ENCODE measurements at regions of chr1 and their contacts with region 1.

Region 1: GRCh38 chr1:172719694-172720138 is 60.8 kb downstream of the FASLG start:
- DNase-seq: peak in 2 of 9 experiments; percentile 73 to 77
- ATAC-seq: peak; percentile 93
- H3K4me3 ChIP-seq: no peak overlapping the region
- H3K4me3 Mint-ChIP-seq: no peak overlapping the region
- H3K27ac ChIP-seq: no peak overlapping the region
- H3K27ac Mint-ChIP-seq: no peak overlapping the region
- H3K4me1 ChIP-seq: no peaks in the 10 kb centered on the region
- H3K4me1 Mint-ChIP-seq: peaks cover 22% of the 10 kb centered on the region
- H3K27me3 ChIP-seq: no peaks in the 10 kb centered on the region
- H3K27me3 Mint-ChIP-seq: peaks cover 3% of the 10 kb centered on the region
- CTCF ChIP-seq: peak; percentile 94

Region 2: DNA sequence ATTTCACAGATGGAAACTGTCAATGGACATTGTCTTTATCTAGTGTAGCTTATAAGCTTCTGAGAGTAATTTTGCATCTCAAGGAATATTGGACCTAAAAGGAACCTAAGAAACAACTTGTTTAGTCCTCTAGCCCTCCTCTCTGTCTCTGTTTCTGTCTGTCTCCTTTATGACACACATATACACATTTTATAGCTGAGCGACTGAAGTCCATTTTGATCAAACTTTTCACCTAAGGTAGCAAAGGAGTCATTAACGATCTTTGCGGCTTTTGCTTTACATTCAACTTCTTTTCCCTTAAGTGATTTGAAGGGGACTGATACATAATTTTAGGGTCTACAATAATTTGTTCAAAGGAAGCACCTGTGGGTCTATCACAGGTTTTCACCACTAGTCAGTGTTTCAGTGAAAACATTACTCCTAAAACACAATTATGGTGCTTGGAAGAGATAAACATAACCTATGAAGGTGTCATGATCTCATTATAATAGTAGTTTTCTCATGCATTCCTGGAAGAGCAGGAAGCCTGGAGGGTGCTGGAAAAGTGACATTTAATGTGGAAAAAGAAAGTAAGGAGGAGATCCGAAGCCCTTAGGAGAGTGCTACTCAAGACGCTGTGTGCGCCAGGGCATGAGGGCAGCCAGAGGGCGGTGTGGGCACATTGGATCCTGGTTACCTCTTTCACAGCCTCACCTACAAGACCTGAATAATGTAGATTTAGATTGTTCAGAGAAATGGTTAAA is 629.8 kb before region 1 on chr1:
- CTCF ChIA-PET with region 1: interaction called, 3 read pairs
- POLR2A ChIA-PET with region 1: no interaction called
- intact Hi-C with region 1: loop called in 1 of 2 experiments (anchors 5 kb)
- DNase-seq: peak; percentile 13 to 74 (median 54)
- ATAC-seq: peak; percentile 84
- H3K4me3 ChIP-seq: no peak overlapping the region
- H3K4me3 Mint-ChIP-seq: no peak overlapping the region
- H3K27ac ChIP-seq: no peak overlapping the region
- H3K27ac Mint-ChIP-seq: no peak overlapping the region
- H3K4me1 ChIP-seq: peaks cover 4% of the 10 kb centered on the region
- H3K4me1 Mint-ChIP-seq: peaks cover 4% of the 10 kb centered on the region
- H3K27me3 ChIP-seq: no peaks in the 10 kb centered on the region
- H3K27me3 Mint-ChIP-seq: no peaks in the 10 kb centered on the region
- CTCF ChIP-seq: peak; percentile 66

Region 3: DNA sequence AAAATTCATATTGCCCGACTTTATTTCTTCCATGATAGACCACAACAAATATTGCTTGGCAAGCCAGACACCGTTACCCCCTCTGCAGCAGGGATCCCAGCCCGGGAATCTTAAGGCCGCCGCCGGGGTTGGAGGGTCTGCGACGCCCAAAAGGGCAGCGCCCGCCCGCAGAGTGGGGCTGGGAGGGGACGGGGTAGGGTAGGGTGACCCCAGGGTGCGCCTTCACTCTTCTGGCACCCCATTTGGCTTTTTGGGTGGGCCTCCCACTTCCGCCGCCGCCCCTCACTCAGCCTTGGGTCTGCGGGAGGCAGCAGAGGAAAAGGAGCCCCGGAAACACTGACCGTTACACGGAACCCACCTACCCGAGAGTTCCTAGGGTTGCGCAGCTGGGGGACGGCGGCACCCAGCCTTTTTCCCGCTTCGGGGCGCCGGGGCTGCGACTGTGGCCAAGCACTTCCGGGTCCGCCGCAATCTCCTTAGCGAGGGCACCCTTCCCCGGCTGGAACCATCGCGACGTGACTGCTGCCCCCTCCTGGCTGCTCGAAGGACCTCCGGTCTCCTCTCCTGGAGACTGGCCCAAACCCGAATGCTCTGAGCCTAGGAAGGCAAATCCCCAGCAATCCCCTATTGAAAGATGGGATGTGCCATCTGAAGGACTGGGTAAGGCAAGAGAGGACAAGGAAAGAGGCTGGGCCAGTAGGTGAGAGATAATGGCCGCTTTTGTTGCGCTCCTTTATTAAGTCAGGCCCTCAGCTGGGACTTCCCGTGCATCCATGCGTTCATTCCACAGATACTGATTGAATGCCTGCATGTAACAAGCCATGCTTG is 275.9 kb before region 1 on chr1 and contains the start of gene PIGC:
- CTCF ChIA-PET with region 1: interaction called, 4 read pairs
- POLR2A ChIA-PET with region 1: no interaction called
- intact Hi-C with region 1: loop called in 1 of 2 experiments (anchors 2 kb)
- DNase-seq: peak; percentile 83 to 94 (median 93)
- ATAC-seq: peak; percentile 99
- H3K4me3 ChIP-seq: peak within 1 kb of the TSS; percentile 78 to 90
- H3K4me3 Mint-ChIP-seq: peak within 1 kb of the TSS; percentile 96
- H3K27ac ChIP-seq: peak within 1 kb of the TSS; percentile 71 to 83
- H3K27ac Mint-ChIP-seq: peak within 1 kb of the TSS; percentile 95
- H3K4me1 ChIP-seq: peaks cover 25% of the 10 kb centered on the region
- H3K4me1 Mint-ChIP-seq: peaks cover 45% of the 10 kb centered on the region
- H3K27me3 ChIP-seq: no peaks in the 10 kb centered on the region
- H3K27me3 Mint-ChIP-seq: no peaks in the 10 kb centered on the region
- CTCF ChIP-seq: peak; percentile 77
- total RNA-seq, gene PIGC: 22.1 to 23.2 TPM

Region 4: DNA sequence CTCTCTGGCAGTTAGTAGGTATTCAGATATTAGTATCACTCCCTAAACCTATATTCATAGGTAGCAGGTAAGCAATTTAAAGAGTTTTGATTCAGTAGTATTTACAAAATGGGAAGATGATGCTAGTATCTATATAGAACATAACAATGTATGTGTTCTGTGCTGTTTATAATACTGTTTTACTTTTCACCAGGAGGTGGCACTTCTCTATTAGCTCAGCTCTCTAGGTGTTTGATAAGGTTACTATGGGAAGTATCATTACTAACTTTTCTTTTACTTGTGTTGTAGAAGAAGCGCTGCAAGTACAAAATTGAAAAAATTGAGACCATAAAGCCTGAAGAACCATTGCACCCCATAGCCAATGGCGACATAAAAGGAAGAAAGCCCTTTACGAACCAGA is 110.2 kb before region 1 on chr1:
- CTCF ChIA-PET with region 1: interaction called, 141 read pairs
- POLR2A ChIA-PET with region 1: interaction called, 6 read pairs
- intact Hi-C with region 1: loop called (anchors 1 kb)
- DNase-seq: peak in 2 of 9 experiments; percentile 53 to 62
- ATAC-seq: peak; percentile 78
- H3K4me3 ChIP-seq: no peak overlapping the region
- H3K4me3 Mint-ChIP-seq: no peak overlapping the region
- H3K27ac ChIP-seq: no peak overlapping the region
- H3K27ac Mint-ChIP-seq: no peak overlapping the region
- H3K4me1 ChIP-seq: no peaks in the 10 kb centered on the region
- H3K4me1 Mint-ChIP-seq: peaks cover 4% of the 10 kb centered on the region
- H3K27me3 ChIP-seq: no peaks in the 10 kb centered on the region
- H3K27me3 Mint-ChIP-seq: no peaks in the 10 kb centered on the region
- CTCF ChIP-seq: peak; percentile 74

Region 5: GRCh38 chr1:172638885-172639831 is 80.6 kb before region 1 on chr1:
- CTCF ChIA-PET with region 1: interaction called, 10 read pairs
- POLR2A ChIA-PET with region 1: no interaction called
- intact Hi-C with region 1: no loop called
- DNase-seq: peak; percentile 25 to 81 (median 63)
- ATAC-seq: peak; percentile 73
- H3K4me3 ChIP-seq: peak overlapping the region in 1 of 2 experiments; percentile 16
- H3K4me3 Mint-ChIP-seq: peak overlapping the region; percentile 65
- H3K27ac ChIP-seq: peak overlapping the region; percentile 5 to 59
- H3K27ac Mint-ChIP-seq: peak overlapping the region; percentile 85
- H3K4me1 ChIP-seq: peaks cover 48% of the 10 kb centered on the region
- H3K4me1 Mint-ChIP-seq: peaks cover 69% of the 10 kb centered on the region
- H3K27me3 ChIP-seq: no peaks in the 10 kb centered on the region
- H3K27me3 Mint-ChIP-seq: no peaks in the 10 kb centered on the region
- CTCF ChIP-seq: no peak

Region 6: DNA sequence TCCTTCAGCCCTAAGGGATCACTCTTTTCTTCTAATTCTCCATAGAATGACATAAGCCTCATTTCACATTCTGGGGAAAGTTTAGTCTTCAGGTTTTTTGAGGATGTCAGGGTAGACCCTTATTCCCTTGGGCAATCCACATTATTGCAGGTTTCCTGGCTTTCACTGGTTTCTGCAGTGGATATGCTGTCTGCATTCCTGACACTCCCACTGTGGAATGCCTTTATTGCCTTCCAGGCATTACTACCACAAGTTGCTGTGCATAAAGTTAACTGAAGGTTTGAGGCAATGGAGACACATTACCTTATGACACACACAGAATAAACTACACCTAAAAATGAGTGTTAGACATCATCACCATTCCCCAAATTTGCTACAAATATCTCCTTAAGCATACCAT is 48.1 kb before region 1 on chr1:
- CTCF ChIA-PET with region 1: interaction called, 7 read pairs
- POLR2A ChIA-PET with region 1: interaction called, 4 read pairs
- intact Hi-C with region 1: loop called in 1 of 2 experiments (anchors 2 kb)
- DNase-seq: no peak
- ATAC-seq: no peak
- H3K4me3 ChIP-seq: no peak overlapping the region
- H3K4me3 Mint-ChIP-seq: no peak overlapping the region
- H3K27ac ChIP-seq: peak overlapping the region in 1 of 2 experiments; percentile 62
- H3K27ac Mint-ChIP-seq: no peak overlapping the region
- H3K4me1 ChIP-seq: peaks cover 54% of the 10 kb centered on the region
- H3K4me1 Mint-ChIP-seq: peaks cover 64% of the 10 kb centered on the region
- H3K27me3 ChIP-seq: no peaks in the 10 kb centered on the region
- H3K27me3 Mint-ChIP-seq: peaks cover 49% of the 10 kb centered on the region
- CTCF ChIP-seq: no peak